ENCODE measurements at regions of chr19 and their contacts with region 1.

Region 1: GRCh38 chr19:13150187-13150930 is at the starts of genes IER2 and STX10:
- DNase-seq: peak; percentile 93 to 94
- ATAC-seq: peak; percentile 67 to 68
- H3K4me3 ChIP-seq: peak within 1 kb of the TSS; percentile 86 to 93 (median 91)
- H3K27ac ChIP-seq: peak within 1 kb of the TSS; percentile 96 to 99 (median 98)
- H3K4me1 ChIP-seq: peaks cover 26 to 32% of the 10 kb centered on the region in 2 donors
- H3K27me3 ChIP-seq: peaks cover 0 to 18% (median 7%) of the 10 kb centered on the region in 3 donors
- CTCF ChIP-seq: peak; percentile 38 to 74 (median 68)
- POLR2A ChIP-seq: peak; percentile 84
- total RNA-seq, gene IER2: 15.4 to 19.1 (median 16.7) TPM
- total RNA-seq, gene STX10: 16.5 to 40.7 (median 33.4) TPM

Region 2: GRCh38 chr19:12789904-12790619 is 360.3 kb before region 1 on chr19:
- in situ Hi-C with region 1: no loop called
- intact Hi-C with region 1: loop called (anchors 5 kb)
- DNase-seq: peak; percentile 89 to 90
- ATAC-seq: peak; percentile 32 to 34
- H3K4me3 ChIP-seq: peak overlapping the region; percentile 91 to 98 (median 94)
- H3K27ac ChIP-seq: peak overlapping the region; percentile 99 to 100 (median 100)
- H3K4me1 ChIP-seq: peaks cover 45 to 46% of the 10 kb centered on the region in 2 donors
- H3K27me3 ChIP-seq: no peaks in the 10 kb centered on the region
- CTCF ChIP-seq: no peak
- POLR2A ChIP-seq: peak; percentile 88 to 93

Region 3: GRCh38 chr19:12983542-12984142 is 166.7 kb before region 1 on chr19:
- in situ Hi-C with region 1: no loop called
- intact Hi-C with region 1: loop called (anchors 2 kb)
- DNase-seq: peak in 1 of 2 donors; percentile 70
- ATAC-seq: peak; percentile 58 to 65
- H3K4me3 ChIP-seq: peak overlapping the region; percentile 28 to 38 (median 34)
- H3K27ac ChIP-seq: peak overlapping the region; percentile 78 to 87 (median 84)
- H3K4me1 ChIP-seq: peaks cover 18 to 20% of the 10 kb centered on the region in 2 donors
- H3K27me3 ChIP-seq: no peaks in the 10 kb centered on the region
- CTCF ChIP-seq: peak; percentile 90 to 100 (median 99)
- POLR2A ChIP-seq: no peak

Region 4: GRCh38 chr19:13117772-13118423 is 32.5 kb before region 1 on chr19 and contains the start of gene NACC1:
- in situ Hi-C with region 1: no loop called
- intact Hi-C with region 1: loop called (anchors 1 kb)
- DNase-seq: peak; percentile 82 to 88
- ATAC-seq: peak; percentile 82 to 83
- H3K4me3 ChIP-seq: peak within 1 kb of the TSS; percentile 90 to 100 (median 94)
- H3K27ac ChIP-seq: peak within 1 kb of the TSS; percentile 79 to 93 (median 86)
- H3K4me1 ChIP-seq: peaks cover 28 to 36% of the 10 kb centered on the region in 2 donors
- H3K27me3 ChIP-seq: no peaks in the 10 kb centered on the region
- CTCF ChIP-seq: peak in 1 of 5 experiments; percentile 11
- POLR2A ChIP-seq: no peak
- total RNA-seq, gene NACC1: 36.3 to 81.3 (median 49.4) TPM

Region 5: GRCh38 chr19:13207846-13208671 is 57.7 kb after region 1 on chr19:
- in situ Hi-C with region 1: no loop called
- intact Hi-C with region 1: loop called (anchors 5 kb)
- DNase-seq: peak in 1 of 2 donors; percentile 24
- ATAC-seq: peak; percentile 26 to 41
- H3K4me3 ChIP-seq: peak overlapping the region; percentile 41 to 53 (median 44)
- H3K27ac ChIP-seq: peak overlapping the region; percentile 49 to 71 (median 58)
- H3K4me1 ChIP-seq: no peaks in the 10 kb centered on the region
- H3K27me3 ChIP-seq: peaks cover 2 to 13% (median 11%) of the 10 kb centered on the region in 3 donors
- CTCF ChIP-seq: no peak
- POLR2A ChIP-seq: no peak

Region 6: GRCh38 chr19:13846557-13847406 is 696.4 kb after region 1 on chr19:
- in situ Hi-C with region 1: no loop called
- intact Hi-C with region 1: loop called (anchors 5 kb)
- DNase-seq: peak; percentile 69 to 87
- ATAC-seq: peak; percentile 38 to 54
- H3K4me3 ChIP-seq: peak overlapping the region; percentile 68 to 78 (median 70)
- H3K27ac ChIP-seq: peak overlapping the region; percentile 96 to 100 (median 98)
- H3K4me1 ChIP-seq: peaks cover 49 to 54% of the 10 kb centered on the region in 2 donors
- H3K27me3 ChIP-seq: no peaks in the 10 kb centered on the region
- CTCF ChIP-seq: no peak
- POLR2A ChIP-seq: peak; percentile 7 to 22

Measured in gastrocnemius medialis (tissue), 4 donors.